ENCODE measurements at regions of chr16 and their contacts with region 1.

Region 1: DNA sequence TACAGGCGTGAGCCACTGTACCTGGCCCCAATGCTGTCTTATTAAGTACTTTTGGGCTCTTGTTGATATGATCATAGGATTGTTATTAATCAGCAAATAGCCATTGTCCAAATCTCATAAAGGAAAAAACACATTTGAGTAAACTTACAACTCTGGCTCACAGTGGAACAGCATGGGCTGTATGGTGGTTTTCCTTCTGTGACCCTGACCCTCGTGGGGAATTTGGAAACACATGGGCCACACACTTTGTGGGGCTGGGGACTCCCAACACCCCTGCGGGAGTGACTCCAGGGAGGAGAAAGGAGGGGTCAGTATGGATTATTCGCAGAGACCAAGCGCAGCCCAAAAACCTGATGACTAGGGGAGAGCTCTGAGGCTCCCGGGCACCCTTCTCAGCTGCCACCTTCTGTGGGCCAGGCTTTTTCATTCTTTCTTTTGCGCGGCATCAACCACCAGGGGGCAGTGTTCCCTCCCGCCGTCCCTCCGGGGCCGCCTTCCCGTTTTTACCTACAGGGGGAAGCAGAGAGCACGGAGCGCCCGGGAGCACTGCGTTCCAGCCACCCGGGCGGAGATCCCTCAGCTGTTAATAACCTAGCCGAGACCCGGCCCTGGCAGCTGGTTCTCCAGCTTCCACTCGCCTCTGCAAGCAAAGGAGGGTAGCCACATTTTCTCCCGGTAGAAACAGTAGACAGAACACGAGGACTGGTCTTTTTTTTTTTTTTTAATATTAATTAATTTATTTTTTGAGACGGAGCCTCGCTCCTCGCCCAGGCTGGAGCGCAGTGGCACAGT is 9.7 kb downstream of the TSNAXIP1 start:
- DNase-seq: peak; percentile 53
- H3K4me3 ChIP-seq: no peak overlapping the region
- H3K27ac ChIP-seq: no peak overlapping the region
- H3K4me1 ChIP-seq: peaks cover 0 to 8% (median 3%) of the 10 kb centered on the region in 3 donors
- H3K27me3 ChIP-seq: no peaks in the 10 kb centered on the region
- CTCF ChIP-seq: peak; percentile 99 to 100 (median 100)
- POLR2A ChIP-seq: no peak

Region 2: GRCh38 chr16:67480833-67481560 is 335.4 kb before region 1 on chr16 and contains the start of gene ATP6V0D1:
- intact Hi-C with region 1: no loop called
- DNase-seq: peak; percentile 84
- H3K4me3 ChIP-seq: peak within 1 kb of the TSS; percentile 80 to 97 (median 89)
- H3K27ac ChIP-seq: peak within 1 kb of the TSS; percentile 87 to 97 (median 96)
- H3K4me1 ChIP-seq: peaks cover 26 to 72% (median 42%) of the 10 kb centered on the region in 3 donors
- H3K27me3 ChIP-seq: no peaks in the 10 kb centered on the region
- CTCF ChIP-seq: peak; percentile 79 to 98 (median 96)
- POLR2A ChIP-seq: peak in 3 of 4 donors; percentile 67 to 90 (median 71)
- total RNA-seq, gene ATP6V0D1: 99.4 to 158 (median 131) TPM

Region 3: DNA sequence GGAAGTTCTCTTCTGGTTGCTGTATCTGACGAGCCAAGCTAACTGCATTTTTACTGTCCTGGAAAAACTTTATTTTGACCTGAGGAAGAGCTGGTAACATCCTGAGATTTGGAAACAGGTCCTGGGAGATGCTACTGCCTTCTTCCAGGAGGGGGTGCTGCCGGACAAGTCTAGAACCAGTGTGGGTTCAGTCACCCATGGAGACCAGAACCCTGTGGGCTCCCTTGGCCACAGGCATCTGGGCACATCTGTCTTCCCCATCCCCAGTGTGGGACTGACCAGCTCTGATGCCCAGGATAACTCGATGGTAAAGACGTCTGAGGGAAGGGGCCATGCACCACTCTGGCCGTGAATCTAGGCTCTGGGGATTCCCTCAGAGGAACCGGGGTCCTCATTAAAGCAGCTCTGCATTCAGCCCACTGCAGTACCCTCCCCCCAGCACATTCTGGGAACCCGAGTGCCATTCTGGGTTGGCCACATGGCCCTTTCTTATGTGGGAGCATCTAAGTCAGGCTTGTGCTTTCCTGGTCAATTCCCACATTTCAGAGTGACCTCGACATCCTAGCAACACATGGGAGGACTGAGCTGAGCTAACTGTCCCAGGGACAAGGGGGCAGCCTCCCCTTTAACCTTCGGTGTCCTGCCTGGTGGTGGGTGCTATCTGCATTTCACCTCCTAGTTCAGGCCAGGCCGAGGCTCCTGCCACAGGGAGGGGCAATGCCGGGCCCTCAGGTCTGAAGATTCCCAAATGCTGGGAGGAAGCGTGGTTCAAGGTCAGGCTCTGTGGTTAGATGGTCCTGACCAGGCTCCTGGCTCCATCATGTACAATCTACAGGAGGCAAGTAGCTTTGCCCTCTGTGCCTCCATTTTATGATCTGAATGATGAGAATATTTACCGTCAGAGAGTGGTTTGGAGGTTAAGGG is 143.4 kb before region 1 on chr16:
- intact Hi-C with region 1: loop called (anchors 10 kb)
- DNase-seq: no peak
- H3K4me3 ChIP-seq: no peak overlapping the region
- H3K27ac ChIP-seq: peak overlapping the region; percentile 68 to 86 (median 77)
- H3K4me1 ChIP-seq: peaks cover 33 to 70% (median 48%) of the 10 kb centered on the region in 3 donors
- H3K27me3 ChIP-seq: no peaks in the 10 kb centered on the region
- CTCF ChIP-seq: peak; percentile 48 to 87 (median 63)
- POLR2A ChIP-seq: no peak

Region 4: DNA sequence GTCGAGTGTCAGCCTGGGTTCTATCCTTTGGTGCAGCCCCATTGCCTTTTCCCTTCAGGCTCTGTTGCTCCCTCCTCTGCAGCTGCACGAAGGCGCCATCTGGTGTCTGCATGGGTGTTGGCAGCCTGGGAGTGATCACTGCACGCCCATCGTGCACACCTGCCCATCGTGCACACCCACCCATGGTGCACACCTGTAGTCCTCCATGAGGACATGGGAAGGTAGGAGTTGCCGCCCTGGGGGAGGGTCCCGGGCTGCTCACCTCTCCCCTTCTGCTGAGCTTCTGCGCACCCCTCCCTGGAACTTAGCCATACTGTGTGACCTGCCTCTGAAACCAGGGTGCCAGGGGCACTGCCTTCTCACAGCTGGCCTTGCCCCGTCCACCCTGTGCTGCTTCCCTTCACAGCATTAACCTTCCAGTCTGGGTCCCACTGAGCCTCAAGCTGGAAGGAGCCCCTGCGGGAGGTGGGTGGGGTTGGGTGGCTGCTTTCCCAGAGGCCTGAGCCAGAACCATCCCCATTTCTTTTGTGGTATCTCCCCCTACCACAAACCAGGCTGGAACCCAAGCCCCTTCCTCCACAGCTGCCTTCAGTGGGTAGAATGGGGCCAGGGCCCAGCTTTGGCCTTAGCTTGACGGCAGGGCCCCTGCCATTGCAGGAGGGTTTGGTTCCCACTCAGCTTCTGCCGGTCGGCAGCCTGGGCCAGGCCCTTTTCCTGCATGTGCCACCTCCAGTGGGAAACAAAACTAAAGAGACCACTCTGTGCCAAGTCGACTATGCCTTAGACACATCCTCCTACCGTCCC is 112.3 kb after region 1 on chr16:
- intact Hi-C with region 1: loop called (anchors 5 kb)
- DNase-seq: no peak
- H3K4me3 ChIP-seq: no peak overlapping the region
- H3K27ac ChIP-seq: no peak overlapping the region
- H3K4me1 ChIP-seq: peaks cover 0 to 34% (median 5%) of the 10 kb centered on the region in 3 donors
- H3K27me3 ChIP-seq: no peaks in the 10 kb centered on the region
- CTCF ChIP-seq: peak; percentile 65 to 92 (median 83)
- POLR2A ChIP-seq: no peak

Region 5: GRCh38 chr16:67959520-67959919 is 143.1 kb after region 1 on chr16:
- intact Hi-C with region 1: no loop called
- DNase-seq: no peak
- H3K4me3 ChIP-seq: no peak overlapping the region
- H3K27ac ChIP-seq: peak overlapping the region; percentile 44 to 72 (median 54)
- H3K4me1 ChIP-seq: peaks cover 14 to 64% (median 48%) of the 10 kb centered on the region in 3 donors
- H3K27me3 ChIP-seq: no peaks in the 10 kb centered on the region
- CTCF ChIP-seq: no peak
- POLR2A ChIP-seq: no peak

Region 6: DNA sequence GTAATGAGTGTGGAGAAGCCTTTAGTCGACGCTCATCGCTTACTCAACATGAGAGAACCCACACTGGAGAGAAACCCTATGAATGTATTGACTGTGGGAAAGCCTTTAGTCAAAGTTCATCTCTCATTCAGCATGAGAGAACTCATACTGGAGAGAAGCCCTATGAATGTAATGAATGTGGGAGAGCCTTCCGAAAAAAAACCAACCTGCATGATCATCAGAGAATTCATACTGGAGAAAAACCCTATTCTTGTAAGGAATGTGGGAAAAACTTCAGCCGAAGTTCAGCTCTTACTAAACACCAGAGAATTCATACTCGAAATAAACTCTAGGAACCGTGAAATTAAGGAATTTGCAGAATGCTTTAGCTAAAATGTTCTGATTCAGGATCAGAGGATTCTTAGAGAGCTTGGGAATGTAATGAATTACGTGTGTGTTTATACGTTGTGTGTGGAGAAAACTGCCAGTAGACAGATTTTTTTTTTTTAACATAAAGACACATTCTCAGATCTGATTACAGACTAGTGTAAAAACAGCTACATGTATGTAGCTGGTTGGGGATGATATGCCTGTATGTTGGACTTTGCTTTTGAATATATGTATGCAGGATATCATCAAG is 748.0 kb after region 1 on chr16:
- intact Hi-C with region 1: no loop called
- DNase-seq: no peak
- H3K4me3 ChIP-seq: no peak overlapping the region
- H3K27ac ChIP-seq: no peak overlapping the region
- H3K4me1 ChIP-seq: no peaks in the 10 kb centered on the region
- H3K27me3 ChIP-seq: no peaks in the 10 kb centered on the region
- CTCF ChIP-seq: no peak
- POLR2A ChIP-seq: no peak

Measured in esophagus squamous epithelium (tissue), 5 donors.